ENCODE measurements at regions of chr5 and their contacts with region 1.

Region 1: DNA sequence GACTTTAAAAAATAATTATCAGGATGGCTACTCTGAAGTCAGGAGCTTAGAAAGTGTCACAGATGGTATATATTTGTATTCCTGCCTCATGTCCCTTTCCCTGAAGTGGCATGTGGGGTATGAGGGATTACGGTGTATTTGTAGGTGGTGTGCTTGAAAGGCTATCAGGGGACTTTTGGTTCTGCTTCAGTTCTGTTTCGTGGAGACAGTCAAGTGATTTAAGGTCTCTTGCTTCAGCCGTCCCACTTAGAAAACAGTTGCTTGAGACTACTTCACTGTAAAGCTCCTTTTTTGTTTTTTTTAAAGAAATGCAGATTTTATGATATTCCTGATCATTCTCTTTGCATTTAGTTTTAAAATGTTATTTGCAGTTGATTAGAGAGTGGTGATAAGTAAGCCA is 18.3 kb downstream of the PARP8 start:
- DNase-seq: no peak
- ATAC-seq: no peak
- H3K4me3 ChIP-seq: no peak overlapping the region
- H3K4me3 Mint-ChIP-seq: no peak overlapping the region
- H3K27ac ChIP-seq: no peak overlapping the region
- H3K27ac Mint-ChIP-seq: peak overlapping the region in 3 of 9 donors; percentile 36 to 63 (median 62)
- H3K4me1 ChIP-seq: peaks cover 22 to 50% of the 10 kb centered on the region in 2 donors
- H3K4me1 Mint-ChIP-seq: peaks cover 29 to 70% (median 53%) of the 10 kb centered on the region in 7 donors
- H3K27me3 ChIP-seq: no peaks in the 10 kb centered on the region
- H3K27me3 Mint-ChIP-seq: no peaks in the 10 kb centered on the region

Region 2: GRCh38 chr5:50653946-50654345 is 30.8 kb before region 1 on chr5:
- CTCF ChIA-PET with region 1: no interaction called
- POLR2A ChIA-PET with region 1: no interaction called
- intact Hi-C with region 1: no loop called
- DNase-seq: no peak
- ATAC-seq: peak; percentile 60
- H3K4me3 ChIP-seq: no peak overlapping the region
- H3K4me3 Mint-ChIP-seq: peak overlapping the region in 3 of 10 donors; percentile 1 to 49 (median 25)
- H3K27ac ChIP-seq: no peak overlapping the region
- H3K27ac Mint-ChIP-seq: peak overlapping the region in 5 of 9 donors; percentile 8 to 85 (median 25)
- H3K4me1 ChIP-seq: peaks cover 0 to 6% of the 10 kb centered on the region in 2 donors
- H3K4me1 Mint-ChIP-seq: peaks cover 8 to 39% (median 29%) of the 10 kb centered on the region in 7 donors
- H3K27me3 ChIP-seq: no peaks in the 10 kb centered on the region
- H3K27me3 Mint-ChIP-seq: no peaks in the 10 kb centered on the region

Region 3: GRCh38 chr5:50702615-50703366 is 18.1 kb after region 1 on chr5:
- CTCF ChIA-PET with region 1: no interaction called
- POLR2A ChIA-PET with region 1: interaction called, 5 read pairs
- intact Hi-C with region 1: loop called in 1 of 2 experiments (anchors 1 kb)
- DNase-seq: peak in 1 of 9 donors; percentile 20
- ATAC-seq: peak; percentile 67
- H3K4me3 ChIP-seq: peak overlapping the region; percentile 2
- H3K4me3 Mint-ChIP-seq: peak overlapping the region in 9 of 10 donors; percentile 49 to 79 (median 60)
- H3K27ac ChIP-seq: peak overlapping the region; percentile 30
- H3K27ac Mint-ChIP-seq: peak overlapping the region; percentile 74 to 96 (median 90)
- H3K4me1 ChIP-seq: peaks cover 31 to 61% of the 10 kb centered on the region in 2 donors
- H3K4me1 Mint-ChIP-seq: peaks cover 36 to 98% (median 90%) of the 10 kb centered on the region in 7 donors
- H3K27me3 ChIP-seq: no peaks in the 10 kb centered on the region
- H3K27me3 Mint-ChIP-seq: no peaks in the 10 kb centered on the region

Measured in naive thymus-derived CD4-positive, alpha-beta T cell (primary cell).